ENCODE measurements at regions of chr2 and their contacts with region 1.

Region 1: GRCh38 chr2:235746257-235747084 is 252.6 kb downstream of the AGAP1 start:
- DNase-seq: peak; percentile 89
- H3K4me3 ChIP-seq: no peak overlapping the region; a peak in 1 of 4 replicates
- H3K27ac ChIP-seq: no peak overlapping the region
- H3K4me1 ChIP-seq: peaks cover 0 to 5% of the 10 kb centered on the region in 2 experiments; a peak in 1 of 4 replicates
- H3K27me3 ChIP-seq: no peaks in the 10 kb centered on the region
- CTCF ChIP-seq: peak; percentile 84
- EP300 ChIP-seq: no peak
- RAD21 ChIP-seq: peak; percentile 94

Region 2: GRCh38 chr2:235135990-235136561 is 610.4 kb before region 1 on chr2:
- CTCF ChIA-PET with region 1: interaction called, 20 read pairs
- POLR2A ChIA-PET with region 1: no interaction called
- DNase-seq: peak; percentile 78
- H3K4me3 ChIP-seq: no peak overlapping the region; a peak in 1 of 4 replicates
- H3K27ac ChIP-seq: no peak overlapping the region
- H3K4me1 ChIP-seq: no peaks in the 10 kb centered on the region
- H3K27me3 ChIP-seq: no peaks in the 10 kb centered on the region; the same call in 1 of the 2 replicates
- CTCF ChIP-seq: peak; percentile 74
- EP300 ChIP-seq: no peak
- RAD21 ChIP-seq: peak; percentile 84

Region 3: DNA sequence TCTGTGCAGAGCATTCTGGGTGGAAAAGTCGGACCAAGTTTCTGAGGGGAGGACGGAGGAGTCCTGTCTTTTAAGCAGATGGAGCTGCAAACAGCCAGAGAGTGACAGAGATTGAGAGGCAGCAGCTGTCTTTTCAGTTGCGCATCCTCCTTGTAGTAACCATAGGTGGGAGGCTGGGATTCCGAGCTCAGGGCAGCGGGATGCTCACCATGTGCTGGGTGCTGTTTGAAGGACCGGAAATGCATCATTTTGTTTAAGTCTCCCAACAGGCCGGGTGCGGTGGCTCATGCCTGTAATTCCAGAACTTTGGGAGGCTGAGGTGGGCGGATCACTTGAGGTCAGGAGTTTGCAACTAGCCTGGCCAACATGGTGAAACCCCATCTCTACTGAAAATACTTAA is 159.3 kb before region 1 on chr2:
- CTCF ChIA-PET with region 1: interaction called, 301 read pairs
- POLR2A ChIA-PET with region 1: no interaction called
- DNase-seq: no peak
- H3K4me3 ChIP-seq: no peak overlapping the region
- H3K27ac ChIP-seq: no peak overlapping the region
- H3K4me1 ChIP-seq: no peaks in the 10 kb centered on the region; a peak in 1 of 4 replicates
- H3K27me3 ChIP-seq: no peaks in the 10 kb centered on the region
- CTCF ChIP-seq: no peak
- EP300 ChIP-seq: no peak
- RAD21 ChIP-seq: no peak

Region 4: GRCh38 chr2:235618039-235618438 is 128.4 kb before region 1 on chr2:
- CTCF ChIA-PET with region 1: interaction called, 12 read pairs
- POLR2A ChIA-PET with region 1: no interaction called
- DNase-seq: no peak
- H3K4me3 ChIP-seq: no peak overlapping the region
- H3K27ac ChIP-seq: no peak overlapping the region
- H3K4me1 ChIP-seq: peaks cover 14 to 15% of the 10 kb centered on the region in 2 experiments; a peak in 2 of 4 replicates
- H3K27me3 ChIP-seq: no peaks in the 10 kb centered on the region
- CTCF ChIP-seq: no peak
- EP300 ChIP-seq: no peak
- RAD21 ChIP-seq: no peak

Region 5: DNA sequence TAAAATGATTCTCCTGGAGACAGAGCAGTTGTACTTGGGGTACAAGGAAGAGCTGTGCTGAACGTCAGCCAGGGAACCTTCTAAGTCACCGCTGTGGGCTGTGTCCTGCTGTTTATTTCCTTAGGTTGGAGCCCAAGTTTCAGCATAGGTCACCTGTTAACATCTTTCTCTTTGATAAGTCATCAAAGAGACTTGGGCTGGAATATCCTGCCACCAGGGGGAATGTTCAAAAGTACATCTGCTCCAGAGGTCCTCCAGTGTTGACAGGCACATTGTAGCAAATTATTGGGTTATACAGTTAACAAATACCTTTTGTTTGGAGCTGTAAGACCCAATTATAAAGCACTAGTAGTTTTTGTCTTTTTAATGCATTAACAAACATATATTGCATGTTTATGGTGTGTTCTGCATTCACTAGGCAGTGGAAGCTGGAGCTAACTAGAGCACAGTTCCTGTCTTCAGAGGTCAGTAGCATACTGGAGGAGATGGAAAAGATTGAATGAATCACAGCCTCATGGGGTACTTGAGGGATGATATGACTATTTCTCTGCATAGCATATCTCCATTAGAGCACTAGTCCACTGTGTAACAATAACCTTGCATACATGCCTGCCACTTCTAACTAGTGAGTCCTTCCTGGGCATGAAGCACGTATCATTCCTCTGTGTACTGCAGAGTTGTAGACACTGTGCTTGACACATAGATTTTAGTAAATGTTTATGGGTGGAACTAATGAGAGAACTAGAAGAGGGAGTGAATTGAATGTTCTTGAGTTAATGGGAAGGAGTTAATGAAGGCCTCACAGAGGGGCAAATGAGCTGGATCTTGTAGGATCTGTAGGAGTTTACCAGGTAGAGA is 70.6 kb before region 1 on chr2:
- CTCF ChIA-PET with region 1: interaction called, 66 read pairs
- POLR2A ChIA-PET with region 1: no interaction called
- DNase-seq: no peak
- H3K4me3 ChIP-seq: no peak overlapping the region
- H3K27ac ChIP-seq: no peak overlapping the region
- H3K4me1 ChIP-seq: peaks cover 0 to 32% of the 10 kb centered on the region in 2 experiments; a peak in 2 of 4 replicates
- H3K27me3 ChIP-seq: no peaks in the 10 kb centered on the region
- CTCF ChIP-seq: peak; percentile 27; the same call in 1 of the 2 replicates
- EP300 ChIP-seq: no peak
- RAD21 ChIP-seq: no peak

Region 6: DNA sequence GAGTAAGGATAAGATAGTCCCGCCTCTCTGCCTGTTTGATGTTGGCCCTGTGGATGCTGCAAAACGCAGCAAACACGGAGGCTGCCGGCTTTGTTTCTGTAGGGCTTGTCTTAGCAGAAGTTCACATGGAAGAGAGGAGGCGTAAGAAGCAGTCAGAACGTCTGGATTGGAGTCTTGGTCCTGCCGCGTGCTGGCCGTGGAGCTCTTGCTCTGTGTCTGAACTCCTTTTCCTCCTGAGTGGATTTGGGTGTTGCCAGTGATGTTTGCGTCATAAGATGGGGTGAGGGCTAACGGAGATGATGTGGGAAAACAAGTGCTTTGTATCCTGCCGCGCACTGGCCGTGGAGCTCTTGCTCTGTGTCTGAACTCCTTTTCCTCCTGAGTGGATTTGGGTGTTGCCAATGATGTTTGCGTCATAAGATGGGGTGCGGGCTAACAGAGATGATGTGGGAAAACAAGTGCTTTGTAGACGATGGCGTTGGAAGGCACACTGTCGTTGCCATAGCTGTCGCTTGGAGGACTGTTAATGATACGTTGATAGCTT is 11.7 kb before region 1 on chr2:
- CTCF ChIA-PET with region 1: interaction called, 35 read pairs
- POLR2A ChIA-PET with region 1: no interaction called
- DNase-seq: no peak
- H3K4me3 ChIP-seq: no peak overlapping the region
- H3K27ac ChIP-seq: no peak overlapping the region
- H3K4me1 ChIP-seq: peaks cover 0 to 4% of the 10 kb centered on the region in 2 experiments; a peak in 1 of 4 replicates
- H3K27me3 ChIP-seq: no peaks in the 10 kb centered on the region
- CTCF ChIP-seq: no peak
- EP300 ChIP-seq: no peak
- RAD21 ChIP-seq: no peak

Measured in SK-N-SH (cell line).